Activated CD4-positive, alpha-beta T cell treated with anti-CD3 and anti-CD28 coated beads for 36 hours (primary cell): ENCODE measurements at regions of chr3 and their contacts with region 1.

Region 1: DNA sequence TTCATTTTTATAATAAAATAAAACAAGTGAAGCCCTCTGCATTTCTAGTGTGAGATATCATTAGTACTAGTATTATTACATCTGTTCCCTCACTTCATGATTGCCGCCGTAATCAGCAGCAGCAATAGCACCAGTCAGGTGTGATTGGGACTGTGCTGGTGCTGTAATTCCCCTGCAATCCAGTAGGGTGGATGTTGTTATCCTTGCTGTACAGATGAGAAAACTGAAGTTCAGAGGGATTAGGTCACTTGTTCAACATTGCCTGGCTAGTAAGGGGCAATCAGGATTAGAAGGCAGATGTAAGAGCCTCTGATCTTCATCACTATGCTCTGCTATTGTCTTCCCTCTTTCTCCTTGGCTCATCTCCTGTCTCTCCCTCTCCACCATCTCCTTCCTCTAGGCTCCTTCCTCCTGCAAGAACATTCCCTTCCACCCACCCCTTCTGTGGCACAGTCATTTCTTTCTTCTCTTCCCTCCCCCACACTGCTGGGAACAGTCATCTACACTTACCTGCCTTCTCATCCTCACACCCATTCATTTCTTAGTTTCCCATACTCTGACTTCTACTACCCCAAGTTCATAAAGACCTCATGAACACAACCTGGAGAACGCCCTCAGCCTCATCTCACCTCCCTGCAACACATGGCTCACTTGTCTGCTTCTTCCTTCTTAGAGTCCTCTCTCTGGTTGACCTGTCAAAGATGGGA is 29.7 kb downstream of the CRYGS start:
- DNase-seq: peak; percentile 67
- ATAC-seq: peak; percentile 67
- H3K4me3 Mint-ChIP-seq: no peak overlapping the region
- H3K27ac Mint-ChIP-seq: peak overlapping the region; percentile 79
- H3K4me1 Mint-ChIP-seq: peaks cover 95% of the 10 kb centered on the region
- H3K27me3 Mint-ChIP-seq: no peaks in the 10 kb centered on the region

Region 2: GRCh38 chr3:186413615-186414415 is 100.6 kb before region 1 on chr3:
- CTCF ChIA-PET with region 1: interaction called, 3 read pairs
- POLR2A ChIA-PET with region 1: no interaction called
- intact Hi-C with region 1: loop called (anchors 2 to 5 kb)
- DNase-seq: peak; percentile 56
- ATAC-seq: peak; percentile 13
- H3K4me3 Mint-ChIP-seq: peak overlapping the region; percentile 51
- H3K27ac Mint-ChIP-seq: peak overlapping the region; percentile 17
- H3K4me1 Mint-ChIP-seq: peaks cover 54% of the 10 kb centered on the region
- H3K27me3 Mint-ChIP-seq: peaks cover 5% of the 10 kb centered on the region

Region 3: DNA sequence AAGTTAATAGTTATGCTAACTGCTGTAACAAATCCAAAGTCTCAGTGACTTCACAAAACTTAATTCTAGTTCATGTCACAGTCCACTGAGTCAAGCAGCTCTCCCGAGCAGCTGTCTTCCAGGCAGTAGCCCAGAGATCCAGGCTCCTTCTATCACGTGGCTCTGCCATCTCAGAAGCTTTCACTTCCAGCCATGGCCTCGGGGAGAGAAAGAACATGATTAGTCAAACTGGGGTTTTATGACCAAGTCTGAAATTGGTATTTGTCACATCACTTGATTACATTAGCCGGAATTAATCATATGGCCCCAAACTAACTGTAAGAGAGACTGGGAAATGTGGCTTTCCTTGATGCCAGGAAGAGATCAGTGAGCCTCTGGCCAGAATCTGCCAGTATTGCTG is 82.3 kb before region 1 on chr3:
- CTCF ChIA-PET with region 1: interaction called, 3 read pairs
- POLR2A ChIA-PET with region 1: no interaction called
- intact Hi-C with region 1: loop called in 1 of 2 experiments (anchors 5 kb)
- DNase-seq: peak; percentile 53
- ATAC-seq: peak; percentile 92
- H3K4me3 Mint-ChIP-seq: no peak overlapping the region
- H3K27ac Mint-ChIP-seq: no peak overlapping the region
- H3K4me1 Mint-ChIP-seq: peaks cover 11% of the 10 kb centered on the region
- H3K27me3 Mint-ChIP-seq: peaks cover 3% of the 10 kb centered on the region